ENCODE measurements at regions of chr2 and their contacts with region 1.

Region 1: GRCh38 chr2:85538486-85539360 is at the start of gene MAT2A:
- DNase-seq: peak; percentile 78 to 91 (median 86)
- H3K4me3 ChIP-seq: peak within 1 kb of the TSS; percentile 78 to 98
- H3K4me3 Mint-ChIP-seq: peak within 1 kb of the TSS; percentile 93 to 97 (median 95)
- H3K27ac ChIP-seq: peak within 1 kb of the TSS; percentile 83
- H3K27ac Mint-ChIP-seq: peak within 1 kb of the TSS; percentile 94 to 97 (median 95)
- H3K4me1 ChIP-seq: peaks cover 44% of the 10 kb centered on the region
- H3K4me1 Mint-ChIP-seq: peaks cover 33 to 58% (median 43%) of the 10 kb centered on the region in 4 donors
- H3K27me3 ChIP-seq: no peaks in the 10 kb centered on the region
- H3K27me3 Mint-ChIP-seq: no peaks in the 10 kb centered on the region
- total RNA-seq, gene MAT2A: 177 to 182 TPM

Region 2: DNA sequence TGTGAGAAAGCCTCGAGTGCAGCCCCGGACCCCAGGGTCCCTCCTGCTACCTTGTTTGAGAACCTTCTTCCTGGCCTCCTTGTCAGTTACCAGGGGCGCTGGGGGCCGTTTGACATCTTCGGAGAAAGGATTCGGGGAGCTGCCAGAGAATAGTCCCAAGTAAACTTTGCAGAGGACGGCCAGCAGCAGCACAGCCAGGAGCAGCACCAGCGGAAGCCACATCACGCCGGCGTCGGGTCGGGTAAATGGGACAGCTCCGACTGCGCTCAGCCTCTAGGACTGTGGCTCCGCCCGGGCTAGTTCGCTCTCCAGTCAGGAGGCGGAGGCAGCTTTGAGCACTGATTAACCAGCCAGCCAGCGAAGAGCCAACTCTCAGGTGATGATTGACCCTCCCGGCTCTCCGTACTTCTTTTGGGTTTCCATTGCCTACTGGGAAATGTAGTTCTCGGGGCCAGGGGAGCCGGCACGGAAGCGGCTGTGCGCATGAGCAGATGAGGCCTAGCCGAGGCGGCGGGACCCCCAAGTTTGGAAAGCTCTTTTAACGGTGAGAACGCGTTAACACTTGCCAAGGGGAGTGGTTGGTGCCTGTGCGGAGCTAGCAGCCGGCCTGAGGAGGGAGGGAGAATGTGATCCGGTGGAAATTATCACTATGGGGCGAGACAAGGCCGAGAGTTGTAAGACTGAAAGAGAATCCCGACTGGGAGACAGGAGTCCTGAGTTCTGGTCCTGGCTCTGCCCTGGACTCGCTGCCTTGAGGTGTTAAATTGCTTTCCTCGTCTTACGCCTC is 184.2 kb before region 1 on chr2 and contains the starts of genes ELMOD3 and RETSAT:
- CTCF ChIA-PET with region 1: no interaction called
- POLR2A ChIA-PET with region 1: interaction called, 43 read pairs
- intact Hi-C with region 1: loop called (anchors 1 kb)
- DNase-seq: peak; percentile 98 to 99 (median 99)
- H3K4me3 ChIP-seq: peak within 1 kb of the TSS; percentile 64 to 81
- H3K4me3 Mint-ChIP-seq: peak within 1 kb of the TSS; percentile 97 to 100 (median 99)
- H3K27ac ChIP-seq: peak within 1 kb of the TSS; percentile 94
- H3K27ac Mint-ChIP-seq: peak within 1 kb of the TSS; percentile 94 to 100 (median 99)
- H3K4me1 ChIP-seq: peaks cover 44% of the 10 kb centered on the region
- H3K4me1 Mint-ChIP-seq: peaks cover 28 to 74% (median 57%) of the 10 kb centered on the region in 4 donors
- H3K27me3 ChIP-seq: no peaks in the 10 kb centered on the region
- H3K27me3 Mint-ChIP-seq: no peaks in the 10 kb centered on the region
- total RNA-seq, gene ELMOD3: 29.8 to 33.2 TPM
- total RNA-seq, gene RETSAT: 33.0 to 33.4 TPM

Region 3: GRCh38 chr2:85420536-85421259 is 118.0 kb before region 1 on chr2:
- CTCF ChIA-PET with region 1: interaction called, 71 read pairs
- POLR2A ChIA-PET with region 1: interaction called, 99 read pairs
- intact Hi-C with region 1: loop called (anchors 1 kb)
- DNase-seq: peak; percentile 81 to 87 (median 81)
- H3K4me3 ChIP-seq: no peak overlapping the region
- H3K4me3 Mint-ChIP-seq: peak overlapping the region; percentile 72 to 84 (median 78)
- H3K27ac ChIP-seq: peak overlapping the region; percentile 12
- H3K27ac Mint-ChIP-seq: peak overlapping the region; percentile 76 to 93 (median 90)
- H3K4me1 ChIP-seq: peaks cover 28% of the 10 kb centered on the region
- H3K4me1 Mint-ChIP-seq: peaks cover 12 to 29% (median 19%) of the 10 kb centered on the region in 4 donors
- H3K27me3 ChIP-seq: no peaks in the 10 kb centered on the region
- H3K27me3 Mint-ChIP-seq: no peaks in the 10 kb centered on the region

Region 4: DNA sequence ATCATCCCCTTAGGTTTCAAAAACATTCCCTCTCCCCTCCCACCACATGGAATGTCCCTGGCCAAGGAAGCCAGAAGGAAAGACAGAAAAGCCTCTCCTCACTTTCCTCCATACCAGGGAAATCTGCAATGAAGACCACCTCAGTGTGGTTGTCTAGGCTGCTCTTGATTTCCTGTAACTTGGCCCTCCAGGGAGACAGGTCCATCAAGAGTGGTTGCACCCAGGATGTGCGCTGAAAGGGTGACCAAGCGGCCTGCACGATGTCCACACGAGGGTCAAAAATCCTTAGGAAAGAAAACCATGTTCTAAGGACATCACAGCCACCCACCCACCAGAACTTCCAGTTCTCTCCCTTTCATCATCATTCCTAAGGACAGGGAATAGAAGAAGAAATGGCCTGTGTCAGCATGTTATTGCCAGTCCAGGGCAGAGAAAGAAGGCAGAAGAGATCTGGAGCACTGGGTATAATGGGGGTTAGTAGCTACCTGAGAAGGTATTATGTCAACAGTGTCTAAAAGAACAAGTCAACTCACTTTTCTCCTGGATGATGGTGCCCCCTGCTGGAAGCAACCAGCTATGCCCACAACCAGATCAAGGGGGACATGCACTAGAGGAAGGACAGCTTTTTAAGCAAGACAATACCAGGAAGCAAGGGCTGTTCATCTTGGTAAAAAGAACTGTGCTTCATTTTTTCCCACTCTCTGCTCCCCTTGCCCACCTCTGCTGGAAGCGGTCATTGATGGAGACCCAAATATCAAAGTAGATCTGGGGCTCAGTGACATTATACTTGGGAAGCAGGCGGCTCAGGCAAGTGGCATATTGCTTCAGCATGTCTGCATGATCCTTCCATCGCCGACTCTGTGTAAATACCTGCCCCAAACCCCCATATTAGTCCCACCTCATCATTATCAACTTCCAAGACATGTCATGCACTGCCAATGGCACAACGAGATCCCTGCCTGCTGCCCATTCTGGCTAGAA is 13.3 kb after region 1 on chr2:
- CTCF ChIA-PET with region 1: interaction called, 144 read pairs
- POLR2A ChIA-PET with region 1: interaction called, 113 read pairs
- intact Hi-C with region 1: loop called (anchors 1 kb)
- DNase-seq: peak; percentile 86 to 90 (median 87)
- H3K4me3 ChIP-seq: no peak overlapping the region
- H3K4me3 Mint-ChIP-seq: no peak overlapping the region
- H3K27ac ChIP-seq: no peak overlapping the region
- H3K27ac Mint-ChIP-seq: peak overlapping the region; percentile 22 to 70 (median 47)
- H3K4me1 ChIP-seq: no peaks in the 10 kb centered on the region
- H3K4me1 Mint-ChIP-seq: peaks cover 0 to 7% (median 4%) of the 10 kb centered on the region in 4 donors
- H3K27me3 ChIP-seq: no peaks in the 10 kb centered on the region
- H3K27me3 Mint-ChIP-seq: no peaks in the 10 kb centered on the region

Region 5: GRCh38 chr2:85577386-85578242 is 38.9 kb after region 1 on chr2 and contains the start of gene VAMP8:
- CTCF ChIA-PET with region 1: no interaction called
- POLR2A ChIA-PET with region 1: interaction called, 30 read pairs
- intact Hi-C with region 1: no loop called
- DNase-seq: peak; percentile 48 to 75 (median 57)
- H3K4me3 ChIP-seq: peak within 1 kb of the TSS; percentile 62 to 86
- H3K4me3 Mint-ChIP-seq: peak within 1 kb of the TSS; percentile 90 to 98 (median 96)
- H3K27ac ChIP-seq: peak within 1 kb of the TSS; percentile 76
- H3K27ac Mint-ChIP-seq: peak within 1 kb of the TSS; percentile 86 to 98 (median 93)
- H3K4me1 ChIP-seq: peaks cover 30% of the 10 kb centered on the region
- H3K4me1 Mint-ChIP-seq: peaks cover 20 to 48% (median 36%) of the 10 kb centered on the region in 4 donors
- H3K27me3 ChIP-seq: no peaks in the 10 kb centered on the region
- H3K27me3 Mint-ChIP-seq: no peaks in the 10 kb centered on the region
- total RNA-seq, gene VAMP8: 98.5 to 107 TPM

Region 6: GRCh38 chr2:85595301-85596025 is 56.7 kb after region 1 on chr2 and contains the start of gene RNF181:
- CTCF ChIA-PET with region 1: interaction called, 3 read pairs
- POLR2A ChIA-PET with region 1: interaction called, 45 read pairs
- intact Hi-C with region 1: loop called (anchors 1 kb)
- DNase-seq: peak; percentile 88 to 97 (median 91)
- H3K4me3 ChIP-seq: peak within 1 kb of the TSS; percentile 49 to 96
- H3K4me3 Mint-ChIP-seq: peak within 1 kb of the TSS; percentile 96 to 99 (median 98)
- H3K27ac ChIP-seq: peak within 1 kb of the TSS; percentile 86
- H3K27ac Mint-ChIP-seq: peak within 1 kb of the TSS; percentile 95 to 99 (median 97)
- H3K4me1 ChIP-seq: peaks cover 26% of the 10 kb centered on the region
- H3K4me1 Mint-ChIP-seq: peaks cover 25 to 42% (median 32%) of the 10 kb centered on the region in 4 donors
- H3K27me3 ChIP-seq: no peaks in the 10 kb centered on the region
- H3K27me3 Mint-ChIP-seq: no peaks in the 10 kb centered on the region
- total RNA-seq, gene RNF181: 73.6 to 77.1 TPM

Region 7: GRCh38 chr2:85611705-85612587 is 73.2 kb after region 1 on chr2 and contains the start of gene C2orf68:
- CTCF ChIA-PET with region 1: no interaction called
- POLR2A ChIA-PET with region 1: interaction called, 32 read pairs
- intact Hi-C with region 1: loop called (anchors 2 kb)
- DNase-seq: peak; percentile 77 to 86 (median 77)
- H3K4me3 ChIP-seq: peak within 1 kb of the TSS; percentile 57 to 86
- H3K4me3 Mint-ChIP-seq: peak within 1 kb of the TSS; percentile 96 to 100 (median 98)
- H3K27ac ChIP-seq: peak within 1 kb of the TSS; percentile 72
- H3K27ac Mint-ChIP-seq: peak within 1 kb of the TSS; percentile 94 to 97 (median 97)
- H3K4me1 ChIP-seq: peaks cover 30% of the 10 kb centered on the region
- H3K4me1 Mint-ChIP-seq: peaks cover 13 to 41% (median 25%) of the 10 kb centered on the region in 4 donors
- H3K27me3 ChIP-seq: no peaks in the 10 kb centered on the region
- H3K27me3 Mint-ChIP-seq: no peaks in the 10 kb centered on the region
- total RNA-seq, gene C2orf68: 87.3 to 89.9 TPM

Region 8: DNA sequence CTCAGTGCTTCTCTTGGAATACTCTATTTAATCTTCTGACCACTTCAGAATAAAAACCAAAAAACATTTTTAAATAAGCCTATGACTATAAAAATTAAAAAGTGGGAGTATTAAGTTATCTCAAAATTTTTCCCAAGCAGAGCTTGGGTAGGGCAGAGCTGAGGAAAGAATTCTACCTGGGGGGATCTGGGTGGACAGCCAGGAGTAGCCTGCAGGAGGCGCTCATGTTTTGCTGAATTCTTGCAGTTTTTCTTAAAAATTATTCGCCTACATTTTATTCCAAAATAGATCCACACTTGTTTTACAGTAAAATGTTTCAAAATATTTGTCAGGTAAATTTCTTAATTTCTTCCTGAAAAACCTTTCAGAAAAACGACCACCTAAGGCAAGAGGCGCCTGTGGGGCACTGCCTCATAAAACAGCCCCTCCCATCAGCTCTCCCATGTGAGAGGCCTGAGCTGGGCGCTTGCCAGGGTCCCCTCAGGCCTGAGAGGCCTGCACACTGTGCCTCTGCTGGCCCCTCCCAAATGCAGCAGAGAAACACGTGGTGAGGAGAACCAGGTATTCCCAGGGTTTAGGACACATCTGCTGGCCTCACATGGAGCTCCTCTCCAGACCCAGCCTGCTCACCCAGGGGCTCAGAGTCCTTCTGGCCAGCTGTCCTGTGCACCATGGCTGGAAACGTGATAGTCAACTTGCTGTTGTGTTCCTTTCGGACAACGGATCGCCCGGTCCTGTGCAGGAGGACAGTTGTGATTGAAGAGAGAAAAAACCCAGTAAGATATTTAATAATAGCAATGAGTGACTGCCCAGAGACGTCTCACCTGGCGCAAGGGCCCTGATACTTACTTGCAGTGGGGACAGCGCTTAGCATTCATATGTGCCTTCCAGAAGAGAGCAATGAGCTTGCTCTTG is 549.5 kb after region 1 on chr2:
- CTCF ChIA-PET with region 1: no interaction called
- POLR2A ChIA-PET with region 1: no interaction called
- intact Hi-C with region 1: no loop called
- DNase-seq: no peak
- H3K4me3 ChIP-seq: no peak overlapping the region
- H3K4me3 Mint-ChIP-seq: no peak overlapping the region
- H3K27ac ChIP-seq: no peak overlapping the region
- H3K27ac Mint-ChIP-seq: no peak overlapping the region
- H3K4me1 ChIP-seq: no peaks in the 10 kb centered on the region
- H3K4me1 Mint-ChIP-seq: peaks cover 0 to 1% (median 0%) of the 10 kb centered on the region in 4 donors
- H3K27me3 ChIP-seq: no peaks in the 10 kb centered on the region
- H3K27me3 Mint-ChIP-seq: no peaks in the 10 kb centered on the region